Prostate gland (tissue), 2 donors: ENCODE measurements at regions of chr6 and their contacts with region 1.

Region 1: GRCh38 chr6:4775584-4776494 is at the start of gene CDYL:
- DNase-seq: peak; percentile 80
- H3K4me3 ChIP-seq: peak within 1 kb of the TSS; percentile 71 to 76
- H3K27ac ChIP-seq: peak within 1 kb of the TSS; percentile 67 to 82
- H3K4me1 ChIP-seq: no peaks in the 10 kb centered on the region
- H3K27me3 ChIP-seq: no peaks in the 10 kb centered on the region
- CTCF ChIP-seq: peak in 2 of 4 experiments; percentile 40 to 63
- POLR2A ChIP-seq: peak; percentile 34
- total RNA-seq, gene CDYL: 28.1 to 54.5 TPM

Region 2: GRCh38 chr6:4358414-4359114 is 417.3 kb before region 1 on chr6:
- intact Hi-C with region 1: loop called (anchors 10 kb)
- DNase-seq: peak; percentile 74
- H3K4me3 ChIP-seq: no peak overlapping the region
- H3K27ac ChIP-seq: peak overlapping the region in 1 of 2 donors; percentile 54
- H3K4me1 ChIP-seq: no peaks in the 10 kb centered on the region
- H3K27me3 ChIP-seq: no peaks in the 10 kb centered on the region
- CTCF ChIP-seq: no peak
- POLR2A ChIP-seq: no peak

Region 3: DNA sequence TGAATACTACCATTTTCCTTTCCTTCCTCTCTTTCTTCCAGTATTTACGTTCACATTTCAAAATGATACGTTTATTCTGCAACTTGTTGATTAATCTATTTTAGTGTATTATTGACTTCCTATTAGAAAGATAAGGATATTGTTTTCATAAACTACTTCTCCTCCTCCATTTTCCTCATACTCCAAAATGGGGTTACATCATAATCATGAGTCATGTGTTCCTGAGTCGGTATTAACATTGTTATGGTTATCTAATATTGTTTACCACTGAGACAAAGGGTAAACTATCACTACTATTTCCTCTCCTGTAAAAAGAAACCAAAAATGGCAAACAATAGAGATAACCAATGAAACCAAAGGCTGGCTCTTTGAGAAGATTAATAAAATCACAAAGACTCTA is 126.1 kb before region 1 on chr6:
- intact Hi-C with region 1: loop called (anchors 5 kb)
- DNase-seq: no peak
- H3K4me3 ChIP-seq: no peak overlapping the region
- H3K27ac ChIP-seq: no peak overlapping the region
- H3K4me1 ChIP-seq: no peaks in the 10 kb centered on the region
- H3K27me3 ChIP-seq: no peaks in the 10 kb centered on the region
- CTCF ChIP-seq: no peak
- POLR2A ChIP-seq: no peak

Region 4: GRCh38 chr6:5003604-5004372 is 227.9 kb after region 1 on chr6 and contains the start of gene RPP40:
- intact Hi-C with region 1: loop called (anchors 10 kb)
- DNase-seq: peak; percentile 93
- H3K4me3 ChIP-seq: peak within 1 kb of the TSS; percentile 51 to 53
- H3K27ac ChIP-seq: peak within 1 kb of the TSS; percentile 80 to 90
- H3K4me1 ChIP-seq: no peaks in the 10 kb centered on the region
- H3K27me3 ChIP-seq: no peaks in the 10 kb centered on the region
- CTCF ChIP-seq: peak; percentile 63 to 81 (median 76)
- POLR2A ChIP-seq: peak; percentile 45
- total RNA-seq, gene RPP40: 4.1 to 5.5 TPM